Endothelial cell of umbilical vein (primary cell): ENCODE measurements at regions of chr9 and their contacts with region 1.

Region 1: GRCh38 chr9:26326473-26327044 is 566.0 kb downstream of the CAAP1 start:
- DNase-seq: peak; percentile 83
- H3K4me3 ChIP-seq: no peak overlapping the region
- H3K27ac ChIP-seq: peak overlapping the region; percentile 38
- H3K4me1 ChIP-seq: peaks cover 4% of the 10 kb centered on the region
- H3K27me3 ChIP-seq: no peaks in the 10 kb centered on the region
- CTCF ChIP-seq: peak; percentile 64 to 69
- POLR2A ChIP-seq: no peak

Region 2: DNA sequence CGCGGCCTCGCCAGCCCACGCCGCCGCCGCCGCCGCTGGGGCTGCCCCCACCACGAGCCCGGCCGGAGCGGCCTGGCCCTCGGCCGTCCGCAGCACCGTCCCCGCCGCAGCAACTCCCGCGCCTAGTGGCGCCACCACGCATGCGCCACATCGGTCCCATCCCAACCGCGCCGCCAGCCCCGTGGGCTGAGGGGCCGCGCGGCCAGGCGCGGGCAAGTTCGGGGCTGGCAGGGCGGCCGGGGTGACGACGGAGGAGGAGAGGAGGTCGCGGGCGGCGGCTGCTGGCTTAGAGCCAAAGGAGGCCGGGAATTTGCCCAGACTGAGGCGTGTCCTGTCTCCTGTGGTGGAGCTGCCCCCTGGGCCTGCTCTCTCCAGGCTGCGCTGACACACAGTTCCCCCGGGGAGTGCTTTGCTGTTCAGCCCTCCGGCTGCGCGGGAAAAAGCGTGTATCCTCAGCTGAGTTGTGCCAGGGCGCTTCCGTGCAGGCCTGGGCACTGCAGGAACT is 648.3 kb before region 1 on chr9 and contains the start of gene TUSC1:
- CTCF ChIA-PET with region 1: interaction called, 3 read pairs
- POLR2A ChIA-PET with region 1: no interaction called
- dilution Hi-C with region 1: no loop called
- intact Hi-C with region 1: loop called (anchors 10 kb)
- DNase-seq: peak; percentile 83
- H3K4me3 ChIP-seq: peak within 1 kb of the TSS; percentile 40 to 70 (median 68)
- H3K27ac ChIP-seq: peak within 1 kb of the TSS; percentile 67
- H3K4me1 ChIP-seq: peaks cover 18% of the 10 kb centered on the region
- H3K27me3 ChIP-seq: no peaks in the 10 kb centered on the region
- CTCF ChIP-seq: no peak
- POLR2A ChIP-seq: no peak
- total RNA-seq, gene TUSC1: 12.1 TPM in 2 replicates

Region 3: DNA sequence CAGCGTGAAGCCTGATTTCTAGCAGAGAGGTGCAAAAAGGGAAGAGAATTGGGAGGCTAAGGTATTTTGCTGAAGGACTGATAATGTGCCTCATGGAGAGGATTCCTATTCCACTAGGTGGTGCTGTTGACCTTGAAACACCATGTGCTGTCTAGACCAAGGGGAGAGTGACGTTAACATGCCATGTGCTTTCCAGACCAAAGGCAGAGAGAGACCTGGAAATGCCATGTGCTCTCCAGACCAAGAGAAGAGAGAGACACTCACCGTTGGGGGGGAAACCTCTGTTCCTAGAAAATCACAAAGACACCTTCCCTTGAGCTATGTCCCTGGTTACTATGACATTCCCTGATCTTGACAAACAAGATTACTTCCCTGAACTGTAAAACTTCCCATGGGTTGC is 362.3 kb before region 1 on chr9:
- CTCF ChIA-PET with region 1: interaction called, 67 read pairs
- POLR2A ChIA-PET with region 1: no interaction called
- dilution Hi-C with region 1: no loop called
- intact Hi-C with region 1: loop called (anchors 1 kb)
- DNase-seq: peak; percentile 70
- H3K4me3 ChIP-seq: no peak overlapping the region
- H3K27ac ChIP-seq: no peak overlapping the region
- H3K4me1 ChIP-seq: no peaks in the 10 kb centered on the region
- H3K27me3 ChIP-seq: no peaks in the 10 kb centered on the region
- CTCF ChIP-seq: peak; percentile 53 to 57
- POLR2A ChIP-seq: no peak

Region 4: DNA sequence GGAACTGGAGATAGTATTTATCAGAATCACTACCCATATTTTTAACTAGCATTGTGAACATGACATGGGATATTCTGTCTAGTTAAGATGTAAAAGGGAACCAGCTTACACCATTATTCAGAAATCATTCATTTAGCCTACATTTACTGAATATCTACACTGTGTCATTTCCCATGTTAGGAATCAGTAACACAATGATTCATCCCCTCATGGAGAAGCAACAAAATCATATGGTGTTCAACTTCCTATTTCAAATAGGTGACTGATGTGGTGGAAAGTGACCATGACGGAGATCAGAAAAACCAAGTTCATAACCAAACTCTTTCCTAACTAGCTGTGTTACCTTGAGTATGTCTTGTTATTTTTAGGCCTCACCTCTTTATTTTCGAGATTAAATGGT is 98.3 kb before region 1 on chr9:
- CTCF ChIA-PET with region 1: interaction called, 11 read pairs
- POLR2A ChIA-PET with region 1: no interaction called
- dilution Hi-C with region 1: no loop called
- intact Hi-C with region 1: no loop called
- DNase-seq: peak; percentile 15
- H3K4me3 ChIP-seq: no peak overlapping the region
- H3K27ac ChIP-seq: no peak overlapping the region
- H3K4me1 ChIP-seq: peaks cover 3% of the 10 kb centered on the region
- H3K27me3 ChIP-seq: no peaks in the 10 kb centered on the region
- CTCF ChIP-seq: no peak
- POLR2A ChIP-seq: no peak

Region 5: DNA sequence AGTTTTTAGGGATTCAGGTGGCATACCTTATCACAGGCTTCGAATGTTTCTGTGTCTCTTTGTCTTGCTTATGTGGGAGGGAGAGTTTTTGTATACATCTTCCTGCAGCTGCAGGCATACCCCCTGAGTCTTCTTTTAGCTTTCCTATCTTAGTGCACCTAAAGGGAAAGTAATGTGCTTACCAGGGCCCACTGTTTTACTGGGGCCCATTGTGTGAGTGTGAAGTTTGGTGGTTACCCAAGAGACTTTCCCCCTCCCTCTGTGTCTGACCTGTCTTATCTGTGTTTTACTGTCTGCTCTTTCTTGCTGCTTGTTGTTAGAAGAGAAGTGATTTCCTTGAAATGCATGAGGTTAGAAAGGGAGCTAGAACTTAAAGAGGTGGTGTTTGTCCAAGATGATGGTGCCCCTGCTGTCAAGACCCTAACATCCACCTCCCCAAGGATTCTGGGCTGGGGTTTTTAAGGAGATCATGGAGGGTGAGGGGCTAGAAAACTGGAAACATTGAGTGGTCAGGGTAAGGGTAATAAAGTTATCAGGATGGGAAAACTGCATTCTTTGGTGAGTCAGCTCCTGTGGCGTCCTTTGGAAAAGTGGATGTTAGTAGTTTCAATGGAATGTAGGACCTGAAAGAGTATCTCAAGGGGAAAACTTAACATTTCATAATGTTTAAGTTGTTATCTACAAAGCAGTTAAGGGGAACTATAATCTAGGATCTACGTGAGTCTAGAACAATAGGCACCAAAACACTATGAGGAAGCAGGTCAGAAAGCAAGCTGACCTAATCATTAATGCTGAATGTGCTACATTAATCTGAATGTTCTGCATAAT is 64.8 kb before region 1 on chr9:
- CTCF ChIA-PET with region 1: interaction called, 9 read pairs
- POLR2A ChIA-PET with region 1: no interaction called
- dilution Hi-C with region 1: no loop called
- intact Hi-C with region 1: loop called (anchors 1 kb)
- DNase-seq: peak; percentile 93
- H3K4me3 ChIP-seq: no peak overlapping the region
- H3K27ac ChIP-seq: peak overlapping the region; percentile 86
- H3K4me1 ChIP-seq: peaks cover 51% of the 10 kb centered on the region
- H3K27me3 ChIP-seq: no peaks in the 10 kb centered on the region
- CTCF ChIP-seq: no peak
- POLR2A ChIP-seq: no peak

Region 6: DNA sequence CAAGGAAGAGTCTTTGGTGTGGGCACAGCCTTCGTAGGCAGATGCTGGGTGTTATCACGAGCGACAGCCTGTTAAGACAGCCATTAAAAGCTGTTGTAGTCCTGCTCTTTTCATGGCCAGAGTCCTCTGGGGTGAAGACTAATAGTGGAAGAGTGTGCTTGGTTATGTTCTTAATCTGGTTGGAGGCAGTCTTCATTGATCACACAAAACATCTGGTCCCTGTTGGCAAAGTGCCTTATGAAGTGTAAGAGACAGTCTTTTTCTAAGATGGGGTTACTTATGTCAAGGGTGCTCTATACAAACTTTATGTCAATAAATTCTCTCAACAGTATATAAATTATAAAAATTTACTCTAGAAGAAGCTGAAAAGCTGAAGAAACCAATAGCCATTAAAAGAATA is 285.7 kb after region 1 on chr9:
- CTCF ChIA-PET with region 1: interaction called, 3 read pairs
- POLR2A ChIA-PET with region 1: no interaction called
- dilution Hi-C with region 1: no loop called
- intact Hi-C with region 1: loop called (anchors 2 kb)
- DNase-seq: no peak
- H3K4me3 ChIP-seq: no peak overlapping the region
- H3K27ac ChIP-seq: no peak overlapping the region
- H3K4me1 ChIP-seq: no peaks in the 10 kb centered on the region
- H3K27me3 ChIP-seq: no peaks in the 10 kb centered on the region
- CTCF ChIP-seq: no peak
- POLR2A ChIP-seq: no peak

Region 7: DNA sequence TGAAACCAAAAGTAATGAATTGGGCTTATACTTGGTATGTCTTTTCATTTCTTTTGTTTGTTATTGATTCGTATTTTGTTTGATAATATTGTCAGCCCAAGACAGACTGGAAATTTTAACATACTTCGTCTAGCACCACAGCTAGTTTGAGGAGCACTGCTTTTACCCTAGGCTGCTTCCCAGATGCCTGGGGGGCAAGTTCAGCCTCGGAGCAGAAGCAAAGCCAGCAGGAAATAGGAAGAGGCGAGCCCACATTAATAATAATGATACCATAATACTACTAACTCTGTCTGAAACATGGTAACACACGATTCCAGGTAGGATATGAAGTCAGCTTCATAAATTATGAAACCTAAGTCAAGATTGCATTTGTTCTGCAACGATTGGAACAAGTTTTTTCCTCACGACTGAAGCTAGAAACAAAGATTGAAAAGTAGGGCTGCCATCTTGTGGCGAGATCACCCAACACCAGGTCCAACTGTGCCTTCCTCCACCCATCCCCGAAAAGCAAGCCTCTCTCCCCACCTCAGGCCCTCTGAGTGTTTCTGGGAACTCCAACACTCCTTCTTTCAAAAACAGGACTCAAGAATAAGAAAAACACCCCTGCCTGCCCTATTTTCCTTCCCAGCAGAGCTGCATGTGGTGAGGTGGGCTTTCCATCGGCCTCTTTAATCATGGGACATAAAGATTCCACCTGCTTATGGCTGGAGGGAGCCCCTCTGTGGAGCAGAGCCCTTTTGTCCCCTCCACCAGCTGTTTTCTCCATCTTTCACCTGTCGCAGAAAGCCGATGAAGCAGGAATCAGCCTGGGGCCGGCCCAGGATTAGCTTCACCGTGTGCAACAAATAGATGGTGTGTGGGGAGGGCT is 329.7 kb after region 1 on chr9:
- CTCF ChIA-PET with region 1: interaction called, 17 read pairs
- POLR2A ChIA-PET with region 1: no interaction called
- dilution Hi-C with region 1: no loop called
- intact Hi-C with region 1: no loop called
- DNase-seq: peak; percentile 10
- H3K4me3 ChIP-seq: no peak overlapping the region
- H3K27ac ChIP-seq: no peak overlapping the region
- H3K4me1 ChIP-seq: no peaks in the 10 kb centered on the region
- H3K27me3 ChIP-seq: no peaks in the 10 kb centered on the region
- CTCF ChIP-seq: peak; percentile 9 to 22
- POLR2A ChIP-seq: no peak